Lower leg skin (tissue), 4 donors: ENCODE measurements at regions of chr6 and their contacts with region 1.

Region 1: GRCh38 chr6:27190126-27190525 is 57.4 kb upstream of the PRSS16 start:
- DNase-seq: no peak
- H3K4me3 ChIP-seq: no peak overlapping the region
- CTCF ChIP-seq: no peak
- POLR2A ChIP-seq: no peak

Region 2: DNA sequence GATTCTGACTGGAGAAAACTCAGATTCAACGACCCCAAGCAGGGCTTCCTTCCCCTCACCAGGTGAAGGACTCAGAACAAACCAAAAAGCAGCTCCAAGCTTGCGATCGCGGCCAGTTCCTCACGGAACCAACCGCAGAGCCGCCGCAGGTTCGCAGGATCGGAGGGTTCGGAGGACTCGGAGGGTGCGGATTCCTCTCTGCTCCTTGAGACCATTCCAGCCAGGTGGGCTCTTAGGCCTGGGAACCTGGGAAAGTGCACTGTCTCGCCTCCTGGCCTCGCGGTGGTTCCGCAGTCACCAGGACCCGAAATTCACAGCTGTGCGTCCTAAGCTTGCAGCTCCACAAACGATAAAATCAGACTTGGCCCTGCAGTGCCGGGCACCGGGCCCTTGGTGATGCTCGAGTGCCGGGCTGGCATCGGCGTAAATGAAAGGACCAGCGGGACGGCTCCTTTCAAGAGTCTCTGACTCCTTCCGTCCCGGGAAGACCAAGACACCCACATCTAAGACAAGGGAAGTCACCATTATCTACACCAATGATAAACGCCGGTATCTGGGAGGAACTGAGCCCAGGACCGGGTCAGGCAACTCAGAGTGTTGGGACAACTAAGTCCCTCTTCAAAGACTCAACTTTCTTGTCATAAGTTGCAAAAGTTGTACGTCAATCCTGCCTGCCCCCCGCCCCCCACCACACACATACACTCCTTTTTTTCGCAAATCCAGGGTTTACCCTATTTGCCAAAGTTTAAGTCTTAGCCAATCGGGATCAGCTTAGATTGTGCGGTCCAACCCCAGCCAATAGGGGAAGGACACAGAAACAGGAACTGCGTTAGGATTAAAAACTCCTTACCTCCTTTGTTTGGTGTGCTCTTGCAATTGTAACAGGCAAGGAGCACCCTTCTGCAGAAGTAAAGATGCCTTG is 12.4 kb before region 1 on chr6:
- intact Hi-C with region 1: no loop called
- DNase-seq: peak; percentile 74 to 94
- H3K4me3 ChIP-seq: peak overlapping the region; percentile 72
- CTCF ChIP-seq: no peak
- POLR2A ChIP-seq: no peak

Region 3: GRCh38 chr6:27785294-27785693 is 595.2 kb after region 1 on chr6:
- intact Hi-C with region 1: loop called (anchors 10 kb)
- DNase-seq: no peak
- H3K4me3 ChIP-seq: no peak overlapping the region
- CTCF ChIP-seq: no peak
- POLR2A ChIP-seq: no peak

Region 4: DNA sequence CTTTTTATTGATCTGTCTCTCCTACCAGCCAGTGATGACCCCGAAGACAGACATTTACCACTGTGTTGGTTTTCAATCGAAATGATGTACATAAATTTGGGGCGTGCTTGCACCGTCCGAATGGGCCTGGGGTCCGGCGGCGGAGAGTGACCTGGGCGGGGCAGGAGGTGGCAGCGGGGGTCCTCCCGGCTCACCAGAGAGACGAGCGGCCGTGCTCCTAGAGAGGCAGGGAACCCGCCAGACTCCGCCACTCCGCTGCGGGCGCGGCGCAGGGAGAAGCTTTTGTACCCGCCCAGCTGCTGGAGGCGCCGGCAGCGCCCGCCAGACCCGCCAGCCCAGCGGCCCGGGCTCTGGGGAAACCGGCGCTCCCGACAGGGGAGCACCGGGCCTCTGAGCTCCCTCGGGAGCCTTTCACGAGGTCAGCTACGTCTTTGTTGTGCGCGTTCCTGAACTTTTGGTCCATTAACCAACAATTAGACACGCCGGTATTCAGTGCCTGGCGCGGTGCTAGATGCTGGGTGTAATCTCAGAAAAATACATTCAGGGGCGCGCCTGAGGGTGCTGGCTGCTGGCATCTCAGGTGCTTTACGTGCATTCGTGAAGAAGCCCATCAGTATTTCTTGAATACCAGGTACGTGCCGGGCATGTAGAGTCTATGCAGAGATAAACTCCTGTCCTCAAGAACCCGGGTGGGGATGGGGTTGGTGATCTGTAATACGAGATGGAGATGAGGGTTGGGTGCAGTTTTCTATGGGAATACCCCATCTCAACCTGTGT is 1091.3 kb after region 1 on chr6 and contains the start of gene PGBD1:
- intact Hi-C with region 1: no loop called
- DNase-seq: peak; percentile 18 to 92
- H3K4me3 ChIP-seq: peak within 1 kb of the TSS; percentile 35
- CTCF ChIP-seq: no peak
- POLR2A ChIP-seq: no peak
- total RNA-seq, gene PGBD1: 0.15 to 1.6 (median 1.1) TPM